ENCODE measurements at regions of chr11 and their contacts with region 1.

Region 1: DNA sequence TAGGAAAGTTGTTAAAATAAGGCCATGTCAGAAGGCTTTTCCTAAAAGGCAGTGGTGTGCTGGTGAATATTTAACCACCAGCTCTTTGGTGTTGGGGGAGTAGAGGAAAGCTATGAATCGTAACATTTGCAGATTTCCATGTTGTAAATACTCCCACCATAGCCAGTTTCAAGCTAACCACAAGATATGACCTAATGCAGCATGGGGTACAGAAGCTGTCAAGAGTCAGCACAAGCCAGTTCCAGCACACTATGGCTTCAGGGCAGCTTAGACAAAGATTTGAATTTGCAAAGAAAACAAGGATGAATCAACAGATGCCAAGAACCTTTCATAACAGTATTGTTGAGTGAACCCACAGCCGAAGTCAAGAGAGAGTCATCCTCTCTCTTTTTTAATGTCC is 40.0 kb downstream of the COMMD9 start:
- DNase-seq: no peak
- H3K4me3 Mint-ChIP-seq: no peak overlapping the region
- H3K27ac Mint-ChIP-seq: no peak overlapping the region
- H3K4me1 Mint-ChIP-seq: no peaks in the 10 kb centered on the region
- H3K27me3 Mint-ChIP-seq: peaks cover 28% of the 10 kb centered on the region

Region 2: DNA sequence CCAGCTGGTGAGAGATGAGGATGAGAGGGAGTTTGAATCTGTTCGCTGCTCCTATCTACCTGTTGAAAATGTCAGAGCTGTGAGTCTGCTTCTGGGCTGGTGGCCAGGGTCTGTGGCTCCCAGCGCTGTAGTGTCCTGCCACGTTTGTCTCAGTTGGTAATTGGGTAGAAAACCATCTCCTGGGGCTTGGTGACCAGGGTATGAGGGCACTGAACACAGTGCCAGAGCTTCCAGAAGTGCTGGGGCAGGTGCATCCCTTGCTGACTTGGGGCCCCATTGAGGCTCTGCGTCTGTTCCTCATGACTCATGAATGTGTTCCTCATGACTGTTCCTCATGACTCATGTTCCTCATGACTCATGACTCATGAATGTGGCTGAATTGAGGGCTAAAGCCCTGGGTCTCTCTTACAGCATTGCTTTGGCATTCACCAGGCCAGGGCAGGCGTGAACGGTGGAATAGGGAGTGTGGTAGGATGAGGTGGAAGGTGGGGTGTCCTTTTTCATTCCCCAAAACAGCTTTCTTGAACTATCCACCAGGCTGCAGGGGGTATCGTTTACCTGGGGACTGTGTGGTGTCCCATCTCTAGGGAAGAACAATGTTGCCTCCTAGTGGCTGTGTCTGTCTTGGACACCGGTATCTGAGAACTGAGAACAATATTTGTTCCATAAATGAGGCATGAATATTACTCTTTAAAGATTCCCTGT is 99.6 kb before region 1 on chr11:
- CTCF ChIA-PET with region 1: no interaction called
- POLR2A ChIA-PET with region 1: no interaction called
- intact Hi-C with region 1: loop called (anchors 10 kb)
- DNase-seq: peak; percentile 66
- H3K4me3 Mint-ChIP-seq: no peak overlapping the region
- H3K27ac Mint-ChIP-seq: no peak overlapping the region
- H3K4me1 Mint-ChIP-seq: peaks cover 10% of the 10 kb centered on the region
- H3K27me3 Mint-ChIP-seq: peaks cover 6% of the 10 kb centered on the region

Region 3: GRCh38 chr11:36273110-36273509 is 23.9 kb after region 1 on chr11:
- CTCF ChIA-PET with region 1: no interaction called
- POLR2A ChIA-PET with region 1: no interaction called
- intact Hi-C with region 1: no loop called
- DNase-seq: no peak
- H3K4me3 Mint-ChIP-seq: no peak overlapping the region
- H3K27ac Mint-ChIP-seq: no peak overlapping the region
- H3K4me1 Mint-ChIP-seq: no peaks in the 10 kb centered on the region
- H3K27me3 Mint-ChIP-seq: no peaks in the 10 kb centered on the region

Measured in activated CD4-positive, alpha-beta memory T cell treated with anti-CD3 and anti-CD28 coated beads for 36 hours (primary cell).